Dorsolateral prefrontal cortex (tissue), 120 donors: ENCODE measurements at regions of chr9 and their contacts with region 1.

Region 1: DNA sequence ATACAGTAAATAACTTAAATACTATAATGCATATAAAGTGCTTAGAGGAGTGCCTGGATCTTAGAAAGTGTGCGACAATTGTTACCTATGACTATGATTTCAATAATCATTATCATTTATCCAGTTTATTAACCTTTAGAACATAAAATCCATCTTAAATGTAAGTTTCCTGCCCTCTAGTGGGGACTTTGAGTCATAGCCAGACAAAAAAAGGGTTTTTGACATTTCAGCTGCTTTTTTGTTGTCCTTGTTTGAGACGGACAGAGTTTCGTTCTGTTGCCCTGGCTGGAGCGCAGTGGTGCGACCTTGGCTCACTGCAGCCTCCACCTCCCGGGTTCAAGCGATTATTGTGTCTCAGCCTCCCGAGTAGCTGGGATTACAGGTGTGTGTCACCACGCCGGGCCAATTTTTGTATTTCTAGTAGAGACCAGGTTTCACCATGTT is 9.7 kb upstream of the C9orf152 start:
- DNase-seq: no peak
- H3K4me3 ChIP-seq: peak overlapping the region in 1 of 59 donors; percentile 4
- H3K27ac ChIP-seq: no peak overlapping the region
- H3K27me3 ChIP-seq: no peaks in the 10 kb centered on the region
- CTCF ChIP-seq: peak; percentile 64 to 95 (median 85)

Region 2: GRCh38 chr9:110183208-110184145 is 34.2 kb before region 1 on chr9:
- intact Hi-C with region 1: loop called (anchors 5 kb)
- DNase-seq: peak in 6 of 10 donors; percentile 9 to 77 (median 44)
- H3K4me3 ChIP-seq: no peak overlapping the region
- H3K27ac ChIP-seq: no peak overlapping the region
- H3K27me3 ChIP-seq: no peaks in the 10 kb centered on the region
- CTCF ChIP-seq: peak; percentile 43 to 88 (median 76)